SK-N-SH (cell line): ENCODE measurements at regions of chr11 and their contacts with region 1.

Region 1: DNA sequence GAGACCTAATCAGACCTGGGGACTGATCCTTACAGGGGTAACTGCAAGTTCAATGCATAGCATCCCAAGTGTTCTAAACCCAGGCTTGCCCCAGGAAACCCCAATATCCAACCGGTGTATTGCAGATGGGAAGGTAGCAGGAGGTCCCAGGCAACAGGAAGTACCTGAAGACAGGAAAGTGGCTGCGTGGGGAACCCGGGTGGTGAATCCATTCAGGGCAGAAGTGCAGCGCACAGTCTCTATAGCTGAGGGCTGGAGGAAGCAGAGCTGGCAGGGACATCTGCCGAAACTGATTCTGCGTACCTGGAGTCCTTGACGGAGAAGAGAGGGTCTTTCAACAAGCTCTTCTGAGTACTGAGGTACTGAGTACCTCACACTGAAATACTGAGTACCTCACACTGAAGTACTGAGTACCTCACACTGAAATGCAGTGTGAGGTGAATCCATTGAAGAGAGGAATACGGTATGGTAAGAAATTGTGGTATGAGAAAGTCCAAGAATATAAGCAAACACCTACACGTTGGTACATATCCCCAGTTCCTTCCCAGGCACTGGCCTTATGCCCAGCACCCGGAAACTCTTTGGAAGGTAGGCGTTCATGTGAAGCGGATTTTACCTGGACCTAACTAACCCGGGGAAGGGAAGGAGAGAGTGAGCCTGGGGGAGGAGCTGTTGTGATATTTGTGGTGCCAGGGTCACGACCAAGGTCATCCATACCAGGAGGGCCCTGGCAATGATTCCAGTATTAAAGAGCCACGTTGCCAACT is 20.1 kb downstream of the SCN4B start:
- DNase-seq: no peak
- H3K4me3 ChIP-seq: no peak overlapping the region
- H3K27ac ChIP-seq: no peak overlapping the region
- H3K4me1 ChIP-seq: no peaks in the 10 kb centered on the region
- H3K27me3 ChIP-seq: peaks cover 35% of the 10 kb centered on the region
- CTCF ChIP-seq: no peak
- EP300 ChIP-seq: no peak
- RAD21 ChIP-seq: no peak

Region 2: GRCh38 chr11:118145285-118146227 is 13.0 kb after region 1 on chr11:
- CTCF ChIA-PET with region 1: interaction called, 14 read pairs
- POLR2A ChIA-PET with region 1: no interaction called
- DNase-seq: peak; percentile 95
- H3K4me3 ChIP-seq: peak overlapping the region; percentile 61 to 89
- H3K27ac ChIP-seq: no peak overlapping the region
- H3K4me1 ChIP-seq: peaks cover 0 to 4% of the 10 kb centered on the region in 2 experiments; a peak in 1 of 4 replicates
- H3K27me3 ChIP-seq: peaks cover 19% of the 10 kb centered on the region; the same call in 1 of the 2 replicates
- CTCF ChIP-seq: peak; percentile 91
- EP300 ChIP-seq: no peak
- RAD21 ChIP-seq: peak; percentile 97

Region 3: DNA sequence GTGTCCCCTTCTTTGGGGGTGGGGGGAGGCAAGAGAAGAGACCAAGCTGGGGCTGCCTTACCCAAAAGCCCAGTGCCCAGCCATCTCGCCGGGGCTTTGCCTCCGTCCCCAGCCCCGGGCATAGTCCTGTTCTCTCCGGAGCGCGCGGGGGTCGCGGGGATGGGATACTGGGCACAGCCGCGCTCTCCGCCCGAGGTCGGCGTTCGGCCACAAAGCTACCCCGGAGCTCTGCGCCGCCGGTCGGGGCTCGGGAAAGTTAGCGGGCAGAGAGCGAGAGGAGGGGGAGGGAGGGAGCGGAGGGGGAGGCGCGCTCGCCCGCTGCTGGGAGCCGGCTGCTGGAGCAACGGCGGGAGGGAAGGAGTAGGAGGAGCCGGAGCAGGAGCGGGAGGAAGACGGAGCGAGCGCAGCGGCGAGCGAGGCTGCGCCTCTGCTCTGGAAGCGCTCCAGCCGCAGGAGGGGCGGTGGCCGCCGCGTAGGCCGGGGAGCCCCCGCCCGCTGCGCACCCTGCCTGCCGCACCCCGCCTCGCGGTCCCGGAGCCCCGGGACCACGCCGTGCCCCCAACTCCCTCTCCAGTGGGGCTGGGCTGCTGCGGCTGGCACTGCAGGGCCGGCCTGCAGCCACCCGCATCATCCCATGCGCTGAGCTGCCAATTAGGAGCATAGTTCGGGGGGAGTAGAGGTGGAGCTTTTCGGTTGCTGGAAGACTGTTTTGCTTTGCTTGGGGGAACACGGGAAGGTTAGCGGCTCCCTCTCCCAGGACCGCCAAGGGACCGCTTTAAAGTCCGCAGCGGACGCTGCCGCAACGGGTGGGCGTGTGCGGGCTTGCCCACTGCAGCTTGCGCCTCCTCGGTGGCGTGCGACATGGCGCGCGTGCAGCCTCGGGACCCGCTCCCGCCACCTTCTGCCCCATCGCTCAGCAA is 20.2 kb after region 1 on chr11 and contains the start of gene SCN4B:
- CTCF ChIA-PET with region 1: interaction called, 10 read pairs
- POLR2A ChIA-PET with region 1: no interaction called
- DNase-seq: peak; percentile 94
- H3K4me3 ChIP-seq: peak within 1 kb of the TSS; percentile 54 to 63
- H3K27ac ChIP-seq: no peak within 1 kb of the TSS; a peak in 1 of 4 replicates
- H3K4me1 ChIP-seq: peaks cover 0 to 16% of the 10 kb centered on the region in 2 experiments; a peak in 1 of 4 replicates
- H3K27me3 ChIP-seq: peaks cover 60% of the 10 kb centered on the region
- CTCF ChIP-seq: no peak
- EP300 ChIP-seq: no peak
- RAD21 ChIP-seq: no peak
- polyA plus RNA-seq, gene SCN4B: 1.2 and 2.0 TPM in 2 replicates